ENCODE measurements at regions of chr14 and their contacts with region 1.

Region 1: GRCh38 chr14:94136575-94137331 is 7.3 kb upstream of the IFI27L2 start:
- DNase-seq: peak; percentile 80
- H3K4me3 ChIP-seq: no peak overlapping the region
- H3K27ac ChIP-seq: no peak overlapping the region
- H3K4me1 ChIP-seq: no peaks in the 10 kb centered on the region
- H3K27me3 ChIP-seq: peaks cover 3 to 11% of the 10 kb centered on the region in 2 experiments
- CTCF ChIP-seq: peak; percentile 95 to 96
- POLR2A ChIP-seq: no peak

Region 2: GRCh38 chr14:93939304-93940229 is 197.2 kb before region 1 on chr14:
- CTCF ChIA-PET with region 1: interaction called, 51 read pairs
- POLR2A ChIA-PET with region 1: no interaction called
- dilution Hi-C with region 1: no loop called
- intact Hi-C with region 1: loop called (anchors 1 kb)
- DNase-seq: peak; percentile 53
- H3K4me3 ChIP-seq: no peak overlapping the region
- H3K27ac ChIP-seq: no peak overlapping the region
- H3K4me1 ChIP-seq: no peaks in the 10 kb centered on the region
- H3K27me3 ChIP-seq: peaks cover 0 to 3% of the 10 kb centered on the region in 2 experiments
- CTCF ChIP-seq: peak; percentile 74 to 77
- POLR2A ChIP-seq: no peak

Region 3: GRCh38 chr14:94036313-94037050 is 100.3 kb before region 1 on chr14:
- CTCF ChIA-PET with region 1: interaction called, 347 read pairs
- POLR2A ChIA-PET with region 1: no interaction called
- dilution Hi-C with region 1: no loop called
- intact Hi-C with region 1: loop called (anchors 1 kb)
- DNase-seq: peak; percentile 69
- H3K4me3 ChIP-seq: no peak overlapping the region
- H3K27ac ChIP-seq: no peak overlapping the region
- H3K4me1 ChIP-seq: no peaks in the 10 kb centered on the region
- H3K27me3 ChIP-seq: no peaks in the 10 kb centered on the region
- CTCF ChIP-seq: peak; percentile 83 to 87
- POLR2A ChIP-seq: no peak

Region 4: GRCh38 chr14:94056579-94057308 is 80.0 kb before region 1 on chr14:
- CTCF ChIA-PET with region 1: interaction called, 133 read pairs
- POLR2A ChIA-PET with region 1: interaction called, 5 read pairs
- dilution Hi-C with region 1: no loop called
- intact Hi-C with region 1: loop called (anchors 1 kb)
- DNase-seq: no peak
- H3K4me3 ChIP-seq: no peak overlapping the region
- H3K27ac ChIP-seq: no peak overlapping the region
- H3K4me1 ChIP-seq: no peaks in the 10 kb centered on the region
- H3K27me3 ChIP-seq: no peaks in the 10 kb centered on the region
- CTCF ChIP-seq: no peak
- POLR2A ChIP-seq: no peak

Region 5: DNA sequence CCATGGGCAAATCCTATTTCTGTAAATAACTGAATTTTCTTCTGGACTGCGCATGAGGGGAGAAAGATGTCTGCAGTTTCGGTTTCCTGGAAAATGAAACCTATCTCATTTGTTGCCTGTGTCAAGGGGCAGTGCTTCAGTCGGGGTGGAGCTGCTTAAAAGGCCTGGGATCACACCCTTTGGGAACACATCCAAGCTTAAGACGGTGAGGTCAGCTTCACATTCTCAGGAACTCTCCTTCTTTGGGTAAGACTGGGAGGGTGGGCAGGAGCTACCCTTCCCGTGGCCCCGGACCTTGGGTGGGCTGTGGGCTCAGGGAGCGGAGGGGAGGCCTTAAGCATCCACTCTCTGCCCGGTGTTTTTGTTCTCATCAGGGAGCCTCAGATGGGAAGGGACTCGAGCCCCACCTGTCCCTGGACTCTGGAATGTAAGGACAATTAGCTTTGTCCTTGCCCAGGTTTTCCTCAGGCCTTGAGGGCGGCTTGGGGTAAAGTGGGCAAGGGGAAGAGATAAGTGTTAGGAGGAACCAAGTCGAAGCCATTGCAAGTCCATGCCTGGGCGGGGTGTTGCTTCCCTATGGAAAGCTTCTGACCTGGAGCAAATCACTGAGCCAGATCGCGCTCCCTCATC is 26.1 kb before region 1 on chr14 and contains the start of gene IFI27:
- CTCF ChIA-PET with region 1: interaction called, 67 read pairs
- POLR2A ChIA-PET with region 1: no interaction called
- dilution Hi-C with region 1: no loop called
- intact Hi-C with region 1: no loop called
- DNase-seq: peak; percentile 62
- H3K4me3 ChIP-seq: peak within 1 kb of the TSS; percentile 20 to 76 (median 33)
- H3K27ac ChIP-seq: peak within 1 kb of the TSS; percentile 67
- H3K4me1 ChIP-seq: peaks cover 19% of the 10 kb centered on the region
- H3K27me3 ChIP-seq: no peaks in the 10 kb centered on the region
- CTCF ChIP-seq: no peak
- POLR2A ChIP-seq: peak; percentile 85
- total RNA-seq, gene IFI27: 72.0 and 126 TPM in 2 replicates

Region 6: GRCh38 chr14:94548999-94549985 is 412.5 kb after region 1 on chr14:
- CTCF ChIA-PET with region 1: interaction called, 6 read pairs
- POLR2A ChIA-PET with region 1: no interaction called
- dilution Hi-C with region 1: no loop called
- intact Hi-C with region 1: loop called (anchors 10 kb)
- DNase-seq: peak; percentile 38
- H3K4me3 ChIP-seq: no peak overlapping the region
- H3K27ac ChIP-seq: no peak overlapping the region
- H3K4me1 ChIP-seq: no peaks in the 10 kb centered on the region
- H3K27me3 ChIP-seq: no peaks in the 10 kb centered on the region
- CTCF ChIP-seq: peak; percentile 75 to 78
- POLR2A ChIP-seq: no peak

Measured in endothelial cell of umbilical vein (primary cell).